Panc1 (cell line): ENCODE measurements at regions of chrX and their contacts with region 1.

Region 1: DNA sequence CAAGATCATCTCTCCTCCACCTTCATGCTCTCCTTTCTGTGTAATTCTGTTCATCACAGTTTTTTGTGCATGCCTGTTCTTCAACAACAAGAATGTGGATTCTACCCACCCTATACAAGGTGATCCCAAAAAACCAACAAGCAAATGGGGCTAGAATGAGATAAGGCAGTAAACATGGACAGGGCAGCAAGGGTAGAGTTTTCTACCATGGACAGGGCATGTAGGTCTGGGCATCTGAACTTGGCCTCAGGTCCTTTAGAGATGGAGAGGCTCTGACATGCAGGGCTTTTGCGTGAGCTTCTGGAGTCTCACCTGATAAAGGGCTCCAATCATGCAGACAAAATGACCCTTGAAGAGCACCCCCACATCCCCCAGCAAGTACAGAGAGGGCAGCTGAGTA is 36.4 kb downstream of the MAP7D2 start:
- DNase-seq: no peak
- ATAC-seq: no peak
- H3K4me3 ChIP-seq: no peak overlapping the region
- H3K27ac ChIP-seq: no peak overlapping the region
- H3K4me1 ChIP-seq: no peaks in the 10 kb centered on the region
- H3K27me3 ChIP-seq: no peaks in the 10 kb centered on the region
- CTCF ChIP-seq: no peak

Region 2: DNA sequence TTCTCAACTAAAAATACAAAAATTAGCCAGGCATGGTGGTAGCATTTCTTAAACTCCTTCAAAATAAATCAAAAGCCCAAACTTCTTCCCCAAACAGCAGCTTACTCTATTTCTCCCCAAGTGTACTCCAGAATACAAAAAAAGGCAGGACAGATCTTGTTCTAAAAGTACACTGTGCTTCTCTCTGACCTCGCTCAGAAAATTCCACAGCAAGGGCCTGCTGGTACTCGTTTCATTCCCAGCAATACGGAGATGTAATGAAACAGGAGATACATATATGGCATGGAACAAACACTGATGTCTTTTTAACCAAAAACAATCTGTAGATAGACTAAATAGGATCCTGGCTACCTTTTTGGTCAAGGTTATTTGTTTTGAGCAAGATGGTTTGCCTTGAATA is 11.2 kb after region 1 on chrX:
- CTCF ChIA-PET with region 1: no interaction called
- POLR2A ChIA-PET with region 1: interaction called, 19 read pairs
- in situ Hi-C with region 1: no loop called
- intact Hi-C with region 1: no loop called
- DNase-seq: no peak
- ATAC-seq: no peak
- H3K4me3 ChIP-seq: no peak overlapping the region
- H3K27ac ChIP-seq: no peak overlapping the region
- H3K4me1 ChIP-seq: no peaks in the 10 kb centered on the region
- H3K27me3 ChIP-seq: no peaks in the 10 kb centered on the region
- CTCF ChIP-seq: no peak

Region 3: DNA sequence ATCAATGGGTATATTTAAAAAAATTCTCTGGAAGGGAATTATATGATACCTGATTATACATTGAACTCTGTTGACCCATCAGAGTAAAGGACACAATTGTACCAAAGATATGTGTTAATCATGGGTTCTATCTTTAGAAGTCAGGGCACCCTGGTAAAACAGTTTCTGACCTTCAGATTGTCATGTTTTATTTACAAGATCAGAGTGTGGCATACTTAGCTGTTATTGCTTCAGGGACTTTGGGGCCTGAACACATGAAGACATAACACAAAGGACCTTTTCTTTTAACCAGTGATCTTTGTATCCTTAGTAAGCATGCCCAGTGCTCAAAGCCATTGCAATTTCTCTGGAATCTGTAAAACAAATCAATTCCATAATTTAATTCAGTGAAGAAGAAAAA is 391.2 kb after region 1 on chrX:
- CTCF ChIA-PET with region 1: no interaction called
- POLR2A ChIA-PET with region 1: no interaction called
- in situ Hi-C with region 1: no loop called
- intact Hi-C with region 1: no loop called
- DNase-seq: no peak
- ATAC-seq: no peak
- H3K4me3 ChIP-seq: no peak overlapping the region
- H3K27ac ChIP-seq: no peak overlapping the region
- H3K4me1 ChIP-seq: no peaks in the 10 kb centered on the region
- H3K27me3 ChIP-seq: no peaks in the 10 kb centered on the region
- CTCF ChIP-seq: no peak